ENCODE measurements at regions of chr7 and their contacts with region 1.

Region 1: GRCh38 chr7:25158966-25159365 is 33.9 kb upstream of the CYCS start:
- DNase-seq: no peak
- H3K4me3 ChIP-seq: no peak overlapping the region
- CTCF ChIP-seq: no peak

Region 2: DNA sequence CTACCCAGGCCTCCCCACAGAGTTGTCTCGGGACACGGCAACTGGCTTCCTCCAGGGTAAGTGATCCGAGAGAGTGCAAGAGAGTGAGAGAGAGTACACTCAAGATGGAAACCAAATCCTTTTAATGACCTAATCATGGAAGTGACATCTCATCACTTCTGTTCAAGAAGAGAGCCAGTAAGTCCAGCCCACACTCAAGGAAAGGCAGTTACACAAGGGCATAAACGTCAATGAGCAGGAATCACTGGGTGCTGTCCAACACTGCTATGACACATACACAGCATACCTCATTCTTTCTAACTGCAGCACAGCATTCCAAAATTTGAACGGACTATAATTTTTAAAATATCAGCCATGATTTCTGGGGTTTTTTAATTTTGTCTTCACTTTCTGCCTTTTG is 149.7 kb before region 1 on chr7:
- CTCF ChIA-PET with region 1: no interaction called
- POLR2A ChIA-PET with region 1: no interaction called
- DNase-seq: peak; percentile 91
- H3K4me3 ChIP-seq: no peak overlapping the region
- CTCF ChIP-seq: no peak

Region 3: DNA sequence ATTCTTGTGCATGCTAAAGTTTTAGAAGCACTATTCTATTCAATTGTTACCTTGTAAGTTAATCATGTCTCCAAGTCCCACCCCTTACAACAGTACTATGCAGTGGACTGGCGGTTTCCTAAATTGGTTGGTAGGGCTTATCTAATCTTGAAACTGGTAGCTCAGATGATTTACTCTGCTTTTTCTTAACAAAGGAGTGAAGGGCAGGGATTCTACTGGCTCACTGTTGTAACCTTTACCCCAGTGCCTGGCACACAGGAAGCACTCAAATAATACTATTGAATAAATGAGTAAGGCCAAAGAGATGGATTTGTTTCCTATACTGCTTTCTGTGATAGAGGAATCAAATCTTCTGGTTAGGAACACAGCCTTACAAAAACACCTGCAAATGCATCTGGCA is 12.1 kb after region 1 on chr7:
- CTCF ChIA-PET with region 1: interaction called, 27 read pairs
- POLR2A ChIA-PET with region 1: no interaction called
- DNase-seq: no peak
- H3K4me3 ChIP-seq: no peak overlapping the region
- CTCF ChIP-seq: no peak

Region 4: DNA sequence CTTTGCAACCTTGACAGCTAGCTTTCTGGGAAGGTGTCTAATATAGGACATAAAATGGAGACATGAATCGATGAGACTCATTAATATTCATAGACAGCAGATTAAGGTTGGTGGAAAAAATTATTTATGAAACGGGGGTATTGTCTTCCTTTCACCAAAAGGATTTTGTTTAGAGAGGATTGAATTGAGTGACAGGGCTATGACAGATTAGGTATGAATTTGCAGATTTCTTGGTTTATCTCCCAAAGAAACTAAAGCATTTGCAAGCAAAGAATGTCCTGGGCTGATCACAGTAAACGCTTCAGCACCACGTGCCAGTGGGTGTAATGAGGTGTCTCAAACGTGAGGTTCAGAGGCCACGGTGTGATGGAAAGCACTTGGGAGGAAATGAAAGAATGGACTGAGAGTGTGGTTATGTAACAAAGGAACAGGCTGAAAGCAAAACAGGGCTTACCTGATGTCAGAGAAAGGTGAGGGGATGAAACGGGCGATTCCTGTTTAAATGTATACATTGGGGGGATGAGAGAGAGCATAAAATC is 398.5 kb after region 1 on chr7:
- CTCF ChIA-PET with region 1: no interaction called
- POLR2A ChIA-PET with region 1: no interaction called
- DNase-seq: no peak
- H3K4me3 ChIP-seq: no peak overlapping the region
- CTCF ChIP-seq: no peak